Thyroid gland (tissue), 4 donors: ENCODE measurements at regions of chr14 and their contacts with region 1.

Region 1: GRCh38 chr14:51996148-51996746 is 6.9 kb downstream of the RTRAF start:
- DNase-seq: no peak
- H3K4me3 ChIP-seq: no peak overlapping the region
- H3K27ac ChIP-seq: peak overlapping the region in 1 of 3 donors; percentile 14
- H3K4me1 ChIP-seq: no peaks in the 10 kb centered on the region
- H3K27me3 ChIP-seq: no peaks in the 10 kb centered on the region
- CTCF ChIP-seq: peak; percentile 39 to 88 (median 78)
- POLR2A ChIP-seq: no peak

Region 2: DNA sequence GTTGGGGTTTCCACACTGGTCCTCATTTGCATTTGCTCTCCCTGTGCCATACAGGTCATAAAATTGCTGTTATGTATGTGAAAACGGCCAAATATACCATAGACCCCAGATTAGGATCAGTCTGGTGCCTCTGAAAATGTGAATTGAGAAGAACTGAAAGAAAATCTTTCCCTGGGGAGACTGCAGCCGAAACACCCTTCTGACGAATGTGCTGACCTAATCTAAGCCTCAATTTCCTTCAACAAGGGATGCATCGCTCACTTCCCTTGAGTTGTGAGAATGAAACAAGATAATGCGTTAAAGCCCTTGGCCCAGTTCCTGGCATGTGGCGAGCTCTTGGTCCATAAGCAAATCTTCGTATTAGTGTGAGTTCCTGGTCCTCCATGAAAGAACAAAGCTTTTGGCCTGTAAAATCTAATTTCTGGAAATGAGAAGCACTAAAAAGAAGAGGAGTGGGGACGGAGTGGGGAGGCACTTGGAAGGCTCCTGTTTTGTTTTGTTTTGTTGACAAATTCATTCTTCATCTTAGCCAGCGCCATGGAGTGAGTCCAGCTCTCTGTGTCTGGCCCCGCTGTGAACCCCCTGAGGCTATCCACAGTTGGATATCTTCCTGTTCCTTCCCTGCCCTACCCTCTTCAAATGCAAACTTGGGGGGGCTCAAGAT is 56.4 kb before region 1 on chr14:
- intact Hi-C with region 1: no loop called
- DNase-seq: no peak
- H3K4me3 ChIP-seq: no peak overlapping the region
- H3K27ac ChIP-seq: no peak overlapping the region
- H3K4me1 ChIP-seq: no peaks in the 10 kb centered on the region
- H3K27me3 ChIP-seq: no peaks in the 10 kb centered on the region
- CTCF ChIP-seq: no peak
- POLR2A ChIP-seq: no peak

Region 3: GRCh38 chr14:52131640-52132320 is 135.5 kb after region 1 on chr14:
- intact Hi-C with region 1: loop called (anchors 5 kb)
- DNase-seq: peak; percentile 87 to 90
- H3K4me3 ChIP-seq: no peak overlapping the region
- H3K27ac ChIP-seq: peak overlapping the region in 2 of 3 donors; percentile 14 to 39
- H3K4me1 ChIP-seq: peaks cover 0 to 8% of the 10 kb centered on the region in 2 donors
- H3K27me3 ChIP-seq: no peaks in the 10 kb centered on the region
- CTCF ChIP-seq: peak; percentile 52 to 93 (median 78)
- POLR2A ChIP-seq: no peak

Region 4: GRCh38 chr14:52188381-52188780 is 192.1 kb after region 1 on chr14:
- intact Hi-C with region 1: no loop called
- DNase-seq: no peak
- H3K4me3 ChIP-seq: no peak overlapping the region
- H3K27ac ChIP-seq: no peak overlapping the region
- H3K4me1 ChIP-seq: no peaks in the 10 kb centered on the region
- H3K27me3 ChIP-seq: no peaks in the 10 kb centered on the region
- CTCF ChIP-seq: no peak
- POLR2A ChIP-seq: no peak